ENCODE measurements at regions of chr15 and their contacts with region 1.

Region 1: DNA sequence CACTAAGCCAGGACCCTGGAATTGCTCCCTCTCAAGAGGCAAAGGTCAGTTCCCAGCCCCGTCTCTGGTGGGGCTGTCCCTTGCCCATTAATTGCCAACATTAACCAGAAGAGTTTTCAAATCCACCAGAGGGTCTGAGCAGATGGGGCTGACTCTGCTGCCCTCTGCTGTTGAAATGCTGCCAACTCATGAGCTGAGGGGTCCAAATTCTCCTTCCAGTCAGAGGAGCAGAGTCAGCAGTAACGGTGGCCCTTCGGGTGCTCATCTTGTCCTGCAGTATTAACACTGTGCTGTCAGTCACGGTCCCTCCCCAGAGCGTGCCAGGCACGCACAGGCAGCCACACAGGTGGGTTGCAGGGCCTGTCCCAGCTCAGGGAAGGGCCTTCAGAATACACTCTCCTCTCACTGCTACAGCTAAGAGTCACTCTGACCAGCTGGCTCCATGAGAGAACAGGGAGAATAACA is 10.7 kb upstream of the SPTBN5 start:
- DNase-seq: peak; percentile 80
- H3K4me3 Mint-ChIP-seq: no peak overlapping the region
- H3K27ac Mint-ChIP-seq: peak overlapping the region; percentile 42
- H3K4me1 Mint-ChIP-seq: peaks cover 17% of the 10 kb centered on the region
- H3K27me3 Mint-ChIP-seq: no peaks in the 10 kb centered on the region

Region 2: DNA sequence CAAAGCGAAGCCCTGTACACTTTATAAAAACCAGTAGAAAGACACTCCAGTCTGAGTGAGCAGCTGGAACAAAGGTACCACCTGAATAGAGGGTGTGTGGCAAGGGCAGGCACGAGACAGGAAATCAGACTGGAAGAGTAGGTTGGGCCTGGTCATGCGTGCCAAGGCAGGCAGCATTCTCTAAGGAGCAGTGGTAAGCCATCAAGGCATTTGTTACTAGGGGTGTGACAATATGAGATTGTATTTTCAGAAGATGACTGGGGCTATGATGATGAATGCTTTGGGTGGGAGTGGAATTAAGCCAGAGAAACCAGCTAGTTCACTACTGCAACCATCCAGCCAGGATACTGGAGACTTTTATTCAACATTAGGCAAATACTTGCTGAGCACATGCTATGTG is 71.7 kb before region 1 on chr15:
- CTCF ChIA-PET with region 1: interaction called, 16 read pairs
- DNase-seq: no peak
- H3K4me3 Mint-ChIP-seq: no peak overlapping the region
- H3K27ac Mint-ChIP-seq: peak overlapping the region; percentile 8
- H3K4me1 Mint-ChIP-seq: peaks cover 50% of the 10 kb centered on the region
- H3K27me3 Mint-ChIP-seq: peaks cover 6% of the 10 kb centered on the region

Region 3: DNA sequence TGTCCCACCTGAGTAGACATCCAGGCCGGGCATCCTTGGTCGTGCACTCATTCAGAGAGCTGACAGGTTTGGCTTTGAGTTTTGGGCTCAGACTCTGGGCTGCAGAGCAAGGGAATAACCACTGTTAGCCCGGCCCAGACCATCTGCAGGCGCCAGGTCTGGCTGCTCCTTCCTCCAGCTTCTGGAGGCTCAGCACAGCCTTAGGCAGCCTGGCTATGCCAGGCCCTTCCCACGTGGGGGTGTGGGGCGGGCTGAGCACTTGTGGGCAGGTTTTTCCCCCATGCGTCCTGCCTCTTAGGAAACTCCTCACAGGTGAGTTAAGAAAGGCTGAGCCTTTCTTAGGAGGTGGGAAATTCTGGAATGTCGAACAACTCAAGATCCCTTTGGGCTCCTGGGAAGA is 54.7 kb before region 1 on chr15:
- CTCF ChIA-PET with region 1: no interaction called
- DNase-seq: no peak
- H3K4me3 Mint-ChIP-seq: no peak overlapping the region
- H3K27ac Mint-ChIP-seq: no peak overlapping the region
- H3K4me1 Mint-ChIP-seq: no peaks in the 10 kb centered on the region
- H3K27me3 Mint-ChIP-seq: peaks cover 18% of the 10 kb centered on the region

Region 4: DNA sequence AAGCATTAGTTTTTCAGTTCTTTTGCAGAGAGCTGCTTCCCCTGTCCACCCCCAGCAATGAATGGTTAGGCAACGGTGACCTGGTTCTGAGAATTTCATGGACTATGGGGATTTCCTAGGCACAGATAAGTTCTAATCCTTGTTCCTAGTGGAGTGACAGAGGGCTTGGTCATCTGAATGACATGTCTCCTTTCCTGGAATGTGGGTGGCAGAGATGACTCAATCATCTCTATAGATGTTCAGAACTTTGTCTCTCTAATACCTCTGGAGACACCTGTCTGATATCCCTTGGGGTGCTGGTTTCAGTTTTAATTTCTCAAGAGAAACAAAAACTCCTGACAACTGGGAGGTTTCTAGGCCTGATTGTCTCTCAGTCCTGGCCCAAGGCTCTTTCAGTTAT is 105.9 kb after region 1 on chr15:
- CTCF ChIA-PET with region 1: no interaction called
- DNase-seq: no peak
- H3K4me3 Mint-ChIP-seq: no peak overlapping the region
- H3K27ac Mint-ChIP-seq: peak overlapping the region; percentile 58
- H3K4me1 Mint-ChIP-seq: peaks cover 11% of the 10 kb centered on the region
- H3K27me3 Mint-ChIP-seq: peaks cover 16% of the 10 kb centered on the region

Measured in activated naive CD4-positive, alpha-beta T cell treated with anti-CD3 and anti-CD28 coated beads, Interleukin-2, amount 10 ng/mL, durations not matched to agents 7 days and 5 days (primary cell).